ENCODE measurements at regions of chr2 and their contacts with region 1.

Region 1: DNA sequence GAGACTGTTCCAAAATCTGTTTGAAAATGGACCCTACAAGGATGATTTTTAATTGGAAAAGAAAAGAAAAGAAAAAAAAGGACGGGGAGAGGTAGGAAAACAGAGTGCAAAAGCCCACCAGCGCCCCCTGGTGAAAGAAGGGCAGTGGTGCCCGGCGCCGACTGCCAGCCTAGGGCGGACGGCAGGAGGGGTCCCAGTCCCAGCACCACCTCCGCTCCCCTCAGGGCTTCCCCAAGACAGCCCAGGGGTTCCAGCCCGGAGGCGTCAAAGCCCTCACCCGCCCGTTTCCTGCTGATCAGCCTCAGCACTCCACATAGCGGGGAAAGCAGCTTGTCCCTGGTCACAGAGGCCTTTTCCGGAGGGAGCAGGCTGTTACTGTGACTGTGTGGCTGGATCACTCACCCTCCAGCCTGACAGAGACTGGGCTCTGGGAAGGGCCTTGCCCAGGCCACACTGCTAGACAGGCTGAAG is 213.9 kb downstream of the TFCP2L1 start:
- DNase-seq: no peak
- ATAC-seq: peak; percentile 79
- H3K4me3 ChIP-seq: no peak overlapping the region
- H3K27ac ChIP-seq: no peak overlapping the region
- H3K4me1 ChIP-seq: no peaks in the 10 kb centered on the region
- H3K27me3 ChIP-seq: peaks cover 0 to 3% of the 10 kb centered on the region in 2 experiments; a peak in 2 of 4 replicates
- CTCF ChIP-seq: peak; percentile 61 to 73 (median 71)
- EP300 ChIP-seq: no peak
- POLR2A ChIP-seq: no peak
- RAD21 ChIP-seq: peak; percentile 54

Region 2: GRCh38 chr2:120693121-120693520 is 377.9 kb before region 1 on chr2:
- CTCF ChIA-PET with region 1: interaction called, 4 read pairs
- POLR2A ChIA-PET with region 1: no interaction called
- RAD21 ChIA-PET with region 1: interaction called, 6 read pairs
- SMC1A ChIA-PET with region 1: no interaction called
- in situ Hi-C with region 1: no loop called
- intact Hi-C with region 1: loop called (anchors 1 kb)
- DNase-seq: no peak
- ATAC-seq: no peak
- H3K4me3 ChIP-seq: no peak overlapping the region
- H3K27ac ChIP-seq: no peak overlapping the region
- H3K4me1 ChIP-seq: no peaks in the 10 kb centered on the region
- H3K27me3 ChIP-seq: peaks cover 4% of the 10 kb centered on the region in 2 experiments; a peak in 2 of 4 replicates
- CTCF ChIP-seq: no peak
- EP300 ChIP-seq: no peak
- POLR2A ChIP-seq: no peak
- RAD21 ChIP-seq: no peak